ENCODE measurements at regions of chr11 and their contacts with region 1.

Region 1: GRCh38 chr11:114197799-114198500 is 98.2 kb upstream of the NNMT start:
- DNase-seq: no peak
- H3K4me3 ChIP-seq: no peak overlapping the region
- H3K4me3 Mint-ChIP-seq: no peak overlapping the region
- H3K27ac Mint-ChIP-seq: no peak overlapping the region
- H3K4me1 ChIP-seq: no peaks in the 10 kb centered on the region; the same call in 1 of the 2 replicates
- H3K4me1 Mint-ChIP-seq: peaks cover 7% of the 10 kb centered on the region
- H3K27me3 ChIP-seq: no peaks in the 10 kb centered on the region
- H3K27me3 Mint-ChIP-seq: no peaks in the 10 kb centered on the region
- CTCF ChIP-seq: no peak

Region 2: GRCh38 chr11:114059278-114059983 is 138.5 kb before region 1 on chr11 and contains the start of gene ZBTB16:
- CTCF ChIA-PET with region 1: interaction called, 3 read pairs
- POLR2A ChIA-PET with region 1: no interaction called
- intact Hi-C with region 1: loop called (anchors 1 kb)
- DNase-seq: peak; percentile 83 to 88
- H3K4me3 ChIP-seq: peak within 1 kb of the TSS; percentile 78
- H3K4me3 Mint-ChIP-seq: peak within 1 kb of the TSS; percentile 86
- H3K27ac Mint-ChIP-seq: peak within 1 kb of the TSS; percentile 74
- H3K4me1 ChIP-seq: peaks cover 10% of the 10 kb centered on the region; the same call in 1 of the 2 replicates
- H3K4me1 Mint-ChIP-seq: peaks cover 16% of the 10 kb centered on the region
- H3K27me3 ChIP-seq: no peaks in the 10 kb centered on the region
- H3K27me3 Mint-ChIP-seq: peaks cover 11% of the 10 kb centered on the region
- CTCF ChIP-seq: peak in 1 of 2 experiments; percentile 78
- total RNA-seq, gene ZBTB16: 10.6 and 12.7 TPM in 2 replicates

Region 3: GRCh38 chr11:114243461-114244372 is 45.8 kb after region 1 on chr11:
- CTCF ChIA-PET with region 1: no interaction called
- POLR2A ChIA-PET with region 1: no interaction called
- intact Hi-C with region 1: no loop called
- DNase-seq: no peak
- H3K4me3 ChIP-seq: no peak overlapping the region
- H3K4me3 Mint-ChIP-seq: no peak overlapping the region
- H3K27ac Mint-ChIP-seq: no peak overlapping the region
- H3K4me1 ChIP-seq: no peaks in the 10 kb centered on the region
- H3K4me1 Mint-ChIP-seq: no peaks in the 10 kb centered on the region
- H3K27me3 ChIP-seq: no peaks in the 10 kb centered on the region
- H3K27me3 Mint-ChIP-seq: no peaks in the 10 kb centered on the region
- CTCF ChIP-seq: no peak

Region 4: GRCh38 chr11:114386545-114386944 is 188.6 kb after region 1 on chr11:
- CTCF ChIA-PET with region 1: no interaction called
- POLR2A ChIA-PET with region 1: no interaction called
- intact Hi-C with region 1: no loop called
- DNase-seq: no peak
- H3K4me3 ChIP-seq: no peak overlapping the region
- H3K4me3 Mint-ChIP-seq: no peak overlapping the region
- H3K27ac Mint-ChIP-seq: no peak overlapping the region
- H3K4me1 ChIP-seq: no peaks in the 10 kb centered on the region
- H3K4me1 Mint-ChIP-seq: no peaks in the 10 kb centered on the region
- H3K27me3 ChIP-seq: no peaks in the 10 kb centered on the region
- H3K27me3 Mint-ChIP-seq: peaks cover 5% of the 10 kb centered on the region
- CTCF ChIP-seq: no peak